Heart left ventricle (tissue), 16 donors: ENCODE measurements at regions of chr17 and their contacts with region 1.

Region 1: GRCh38 chr17:19370493-19370960 is 7.8 kb upstream of the MAPK7 start:
- DNase-seq: peak; percentile 59 to 83 (median 78)
- ATAC-seq: peak; percentile 63 to 91 (median 81)
- H3K4me3 ChIP-seq: no peak overlapping the region
- H3K27ac ChIP-seq: peak overlapping the region; percentile 9 to 73 (median 62)
- H3K4me1 ChIP-seq: peaks cover 0 to 50% (median 16%) of the 10 kb centered on the region in 12 donors
- H3K27me3 ChIP-seq: no peaks in the 10 kb centered on the region
- CTCF ChIP-seq: no peak
- POLR2A ChIP-seq: no peak

Region 2: DNA sequence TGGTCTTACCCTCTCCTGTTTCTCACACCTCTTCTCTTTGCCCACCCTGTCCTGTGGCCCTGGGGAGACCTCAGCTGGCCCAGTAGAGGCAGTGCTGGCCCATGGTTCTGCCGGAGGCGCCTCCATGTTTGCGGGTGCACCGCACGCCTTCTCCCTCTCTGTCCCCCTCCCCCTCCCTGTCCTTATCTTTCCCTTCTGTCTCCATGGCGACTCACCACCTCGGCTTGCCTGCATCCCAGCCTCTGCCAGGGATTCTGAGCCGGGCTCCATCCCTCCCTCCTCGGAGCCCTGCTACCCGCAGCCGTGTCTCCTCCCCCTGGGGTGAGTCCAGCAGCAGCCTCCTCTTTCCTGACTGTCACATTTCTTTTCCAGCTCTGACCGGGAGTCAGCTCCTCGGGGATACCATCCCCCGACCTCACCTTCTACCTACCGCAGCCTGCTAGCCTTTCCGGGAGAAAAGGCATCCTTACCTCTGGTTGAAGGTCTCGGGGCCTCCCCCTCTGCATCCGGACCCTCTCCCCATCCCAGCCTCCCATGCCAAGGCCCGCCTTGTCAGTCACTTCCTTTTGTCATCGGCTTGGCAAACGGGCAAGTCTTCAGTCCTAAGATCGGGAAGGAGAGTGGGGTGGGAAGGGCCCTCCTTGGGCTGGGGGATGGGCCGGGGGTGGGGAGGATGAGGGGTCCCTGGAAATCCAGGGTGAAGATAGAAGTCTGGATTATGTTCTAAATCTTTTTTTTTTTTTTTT is 40.5 kb after region 1 on chr17 and contains the start of gene RNF112:
- intact Hi-C with region 1: loop called in 1 of 10 experiments (anchors 5 kb)
- DNase-seq: peak in 1 of 5 donors; percentile 51
- ATAC-seq: peak in 3 of 4 donors; percentile 46 to 65 (median 59)
- H3K4me3 ChIP-seq: peak within 1 kb of the TSS in 10 of 12 donors; percentile 2 to 55 (median 36)
- H3K27ac ChIP-seq: peak within 1 kb of the TSS in 1 of 12 donors; percentile 32
- H3K4me1 ChIP-seq: peaks cover 0 to 14% (median 0%) of the 10 kb centered on the region in 12 donors
- H3K27me3 ChIP-seq: no peaks in the 10 kb centered on the region
- CTCF ChIP-seq: peak in 3 of 12 donors; percentile 3 to 26 (median 9)
- POLR2A ChIP-seq: no peak
- total RNA-seq, gene RNF112: 0.45 to 1.5 (median 1.1) TPM

Region 3: GRCh38 chr17:19631905-19632304 is 261.4 kb after region 1 on chr17:
- intact Hi-C with region 1: no loop called
- DNase-seq: no peak
- ATAC-seq: no peak
- H3K4me3 ChIP-seq: no peak overlapping the region
- H3K27ac ChIP-seq: no peak overlapping the region
- H3K4me1 ChIP-seq: no peaks in the 10 kb centered on the region
- H3K27me3 ChIP-seq: no peaks in the 10 kb centered on the region
- CTCF ChIP-seq: no peak
- POLR2A ChIP-seq: no peak